ENCODE measurements at regions of chr7 and their contacts with region 1.

Region 1: GRCh38 chr7:12211054-12211710 is at the start of gene TMEM106B:
- DNase-seq: peak; percentile 97
- H3K4me3 Mint-ChIP-seq: peak within 1 kb of the TSS; percentile 86
- H3K27ac Mint-ChIP-seq: peak within 1 kb of the TSS; percentile 93
- H3K4me1 Mint-ChIP-seq: peaks cover 17% of the 10 kb centered on the region
- H3K27me3 Mint-ChIP-seq: no peaks in the 10 kb centered on the region
- total RNA-seq, gene TMEM106B: 25.3 to 28.3 TPM

Region 2: GRCh38 chr7:11831736-11832495 is 379.3 kb before region 1 on chr7 and contains the start of gene THSD7A:
- CTCF ChIA-PET with region 1: no interaction called
- intact Hi-C with region 1: loop called (anchors 5 kb)
- DNase-seq: no peak
- H3K4me3 Mint-ChIP-seq: peak within 1 kb of the TSS; percentile 32
- H3K27ac Mint-ChIP-seq: no peak within 1 kb of the TSS
- H3K4me1 Mint-ChIP-seq: peaks cover 12% of the 10 kb centered on the region
- H3K27me3 Mint-ChIP-seq: peaks cover 47% of the 10 kb centered on the region
- total RNA-seq, gene THSD7A: not detected

Region 3: DNA sequence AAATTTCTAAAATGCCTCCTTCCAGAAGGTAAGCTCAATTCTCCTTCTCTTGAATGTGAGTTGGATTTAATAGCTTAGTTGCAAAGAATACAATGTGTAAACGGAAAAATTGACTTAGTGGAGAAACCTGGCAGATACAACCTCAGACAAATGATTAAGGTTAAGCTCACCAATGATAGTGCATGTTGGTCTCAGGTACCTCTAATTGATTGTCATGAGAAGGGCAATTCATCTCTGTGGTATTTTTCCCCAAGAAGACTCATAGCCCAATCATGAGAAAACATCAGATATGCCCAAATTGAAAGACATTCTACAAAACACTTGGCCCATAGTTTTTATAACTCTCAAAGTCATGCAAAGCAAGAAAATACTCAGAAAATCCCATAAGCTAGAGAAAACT is 36.3 kb before region 1 on chr7:
- CTCF ChIA-PET with region 1: no interaction called
- intact Hi-C with region 1: loop called (anchors 1 kb)
- DNase-seq: no peak
- H3K4me3 Mint-ChIP-seq: no peak overlapping the region
- H3K27ac Mint-ChIP-seq: no peak overlapping the region
- H3K4me1 Mint-ChIP-seq: peaks cover 17% of the 10 kb centered on the region
- H3K27me3 Mint-ChIP-seq: no peaks in the 10 kb centered on the region

Region 4: GRCh38 chr7:12199363-12199762 is 11.8 kb before region 1 on chr7:
- CTCF ChIA-PET with region 1: no interaction called
- intact Hi-C with region 1: no loop called
- DNase-seq: no peak
- H3K4me3 Mint-ChIP-seq: no peak overlapping the region
- H3K27ac Mint-ChIP-seq: no peak overlapping the region
- H3K4me1 Mint-ChIP-seq: no peaks in the 10 kb centered on the region
- H3K27me3 Mint-ChIP-seq: no peaks in the 10 kb centered on the region

Region 5: DNA sequence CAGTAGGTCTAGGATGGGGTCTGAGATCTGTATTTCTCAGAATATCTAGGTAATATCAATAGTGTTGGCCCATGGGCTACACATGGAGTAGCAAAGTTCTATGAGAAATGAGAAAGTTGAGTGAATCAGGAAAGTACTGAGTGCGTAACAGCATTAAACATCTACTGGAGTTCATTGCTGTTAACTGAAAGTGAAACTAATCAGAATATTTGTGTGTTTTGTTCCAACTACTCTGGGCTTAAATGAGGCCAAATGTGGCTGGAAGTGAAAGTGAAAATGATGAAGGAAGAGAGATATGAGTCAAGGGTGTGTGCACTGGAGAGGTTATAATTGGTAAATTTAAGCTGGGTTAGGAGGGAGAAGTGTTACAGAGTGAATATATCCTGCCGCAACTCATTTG is 46.4 kb after region 1 on chr7:
- CTCF ChIA-PET with region 1: no interaction called
- intact Hi-C with region 1: loop called (anchors 1 kb)
- DNase-seq: peak; percentile 48
- H3K4me3 Mint-ChIP-seq: no peak overlapping the region
- H3K27ac Mint-ChIP-seq: no peak overlapping the region
- H3K4me1 Mint-ChIP-seq: peaks cover 6% of the 10 kb centered on the region
- H3K27me3 Mint-ChIP-seq: no peaks in the 10 kb centered on the region

Region 6: DNA sequence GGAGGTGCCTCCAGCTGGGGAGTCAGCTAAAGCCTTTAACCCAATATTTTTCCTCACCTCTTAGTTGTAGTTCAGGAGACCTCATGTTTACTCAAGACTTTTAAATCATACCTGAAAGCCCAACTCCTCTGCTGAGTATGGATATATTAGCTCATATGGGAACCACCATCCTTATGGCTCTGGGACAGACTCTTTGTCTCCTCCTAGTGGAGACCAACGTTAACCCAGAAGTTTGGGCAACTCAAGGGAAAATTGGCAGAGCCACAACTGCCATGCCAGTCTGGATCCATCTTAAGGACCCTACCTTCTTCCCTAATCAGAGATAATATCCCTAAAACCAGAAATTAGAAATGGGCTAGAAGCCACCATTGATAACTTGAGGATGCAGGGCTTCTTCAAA is 80.7 kb after region 1 on chr7:
- CTCF ChIA-PET with region 1: interaction called, 15 read pairs
- intact Hi-C with region 1: loop called (anchors 1 kb)
- DNase-seq: peak; percentile 17
- H3K4me3 Mint-ChIP-seq: no peak overlapping the region
- H3K27ac Mint-ChIP-seq: no peak overlapping the region
- H3K4me1 Mint-ChIP-seq: peaks cover 5% of the 10 kb centered on the region
- H3K27me3 Mint-ChIP-seq: peaks cover 5% of the 10 kb centered on the region

Region 7: GRCh38 chr7:12403287-12404181 is 192.4 kb after region 1 on chr7 and contains the start of gene VWDE:
- CTCF ChIA-PET with region 1: no interaction called
- intact Hi-C with region 1: loop called (anchors 2 kb)
- DNase-seq: peak; percentile 76
- H3K4me3 Mint-ChIP-seq: peak within 1 kb of the TSS; percentile 75
- H3K27ac Mint-ChIP-seq: peak within 1 kb of the TSS; percentile 77
- H3K4me1 Mint-ChIP-seq: peaks cover 9% of the 10 kb centered on the region
- H3K27me3 Mint-ChIP-seq: peaks cover 14% of the 10 kb centered on the region
- total RNA-seq, gene VWDE: 1.5 to 1.9 TPM

Region 8: DNA sequence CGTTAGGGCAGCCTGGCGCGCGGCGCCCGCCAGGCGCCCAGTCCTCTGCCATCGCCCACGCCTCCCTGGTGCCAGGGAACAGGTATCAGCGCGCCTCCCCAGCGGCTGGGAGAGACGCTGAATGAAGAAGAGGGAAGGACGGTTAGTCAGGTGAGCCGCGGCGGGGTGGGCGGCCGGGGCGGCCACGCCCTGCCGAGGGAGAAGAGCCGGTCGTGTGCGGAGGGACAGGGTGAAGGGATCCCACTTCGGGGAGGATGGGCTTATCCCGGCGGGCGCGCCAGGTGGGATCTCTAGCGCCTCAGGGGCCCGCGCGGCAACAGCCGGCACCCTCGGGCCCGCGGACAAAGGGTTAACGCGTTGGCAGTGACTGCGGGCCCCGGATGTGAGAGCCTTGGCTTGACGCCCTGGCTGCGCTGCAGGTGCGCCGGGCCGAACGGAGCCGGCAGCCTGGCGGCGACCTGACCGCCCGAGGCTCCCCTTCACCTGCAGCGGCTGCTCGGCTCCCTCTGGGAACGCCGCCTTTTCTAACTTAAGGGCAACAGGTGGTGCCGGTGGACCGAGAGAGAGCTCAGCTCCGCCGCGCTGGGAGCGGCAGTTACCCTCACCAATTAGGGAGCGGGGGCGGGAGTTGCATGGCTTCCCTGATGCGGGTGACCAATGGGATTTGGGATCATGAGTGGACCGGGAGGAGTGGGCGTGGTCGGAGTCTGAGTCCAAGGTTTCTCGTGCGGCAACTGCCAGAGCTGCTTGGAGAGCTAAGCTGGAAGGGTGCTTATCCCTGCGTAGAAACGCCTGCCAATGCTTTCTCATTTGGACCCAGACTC is 475.9 kb after region 1 on chr7 and contains the start of gene ARL4A:
- CTCF ChIA-PET with region 1: no interaction called
- intact Hi-C with region 1: loop called (anchors 1 kb)
- DNase-seq: peak; percentile 97
- H3K4me3 Mint-ChIP-seq: peak within 1 kb of the TSS; percentile 96
- H3K27ac Mint-ChIP-seq: peak within 1 kb of the TSS; percentile 92
- H3K4me1 Mint-ChIP-seq: peaks cover 26% of the 10 kb centered on the region
- H3K27me3 Mint-ChIP-seq: no peaks in the 10 kb centered on the region
- total RNA-seq, gene ARL4A: 8.1 to 10.0 TPM

Measured in activated naive CD4-positive, alpha-beta T cell treated with anti-CD3 and anti-CD28 coated beads for 36 hours (primary cell).